ENCODE measurements at regions of chr18 and their contacts with region 1.

Region 1: GRCh38 chr18:45664824-45665763 is 49.8 kb downstream of the SLC14A2 start:
- DNase-seq: peak; percentile 53 to 88
- ATAC-seq: peak; percentile 78 to 89 (median 86)
- H3K4me3 ChIP-seq: no peak overlapping the region
- H3K4me3 Mint-ChIP-seq: peak overlapping the region; percentile 82
- H3K27ac ChIP-seq: peak overlapping the region; percentile 49
- H3K27ac Mint-ChIP-seq: peak overlapping the region; percentile 85 to 88
- H3K4me1 ChIP-seq: peaks cover 41% of the 10 kb centered on the region
- H3K4me1 Mint-ChIP-seq: peaks cover 35 to 55% of the 10 kb centered on the region in 2 donors
- H3K27me3 ChIP-seq: no peaks in the 10 kb centered on the region
- H3K27me3 Mint-ChIP-seq: no peaks in the 10 kb centered on the region
- CTCF ChIP-seq: peak; percentile 96

Region 2: GRCh38 chr18:45722899-45723298 is 57.8 kb after region 1 on chr18:
- intact Hi-C with region 1: loop called (anchors 1 kb)
- DNase-seq: peak; percentile 60 to 69
- ATAC-seq: peak; percentile 81 to 99 (median 99)
- H3K4me3 ChIP-seq: no peak overlapping the region
- H3K4me3 Mint-ChIP-seq: no peak overlapping the region
- H3K27ac ChIP-seq: no peak overlapping the region
- H3K27ac Mint-ChIP-seq: no peak overlapping the region
- H3K4me1 ChIP-seq: no peaks in the 10 kb centered on the region
- H3K4me1 Mint-ChIP-seq: no peaks in the 10 kb centered on the region
- H3K27me3 ChIP-seq: no peaks in the 10 kb centered on the region
- H3K27me3 Mint-ChIP-seq: no peaks in the 10 kb centered on the region
- CTCF ChIP-seq: peak; percentile 70

Region 3: GRCh38 chr18:45839414-45840395 is 174.6 kb after region 1 on chr18:
- intact Hi-C with region 1: loop called (anchors 1 kb)
- DNase-seq: peak in 1 of 2 donors; percentile 61
- ATAC-seq: peak; percentile 55 to 61 (median 60)
- H3K4me3 ChIP-seq: no peak overlapping the region
- H3K4me3 Mint-ChIP-seq: peak overlapping the region; percentile 76
- H3K27ac ChIP-seq: no peak overlapping the region
- H3K27ac Mint-ChIP-seq: no peak overlapping the region
- H3K4me1 ChIP-seq: peaks cover 11% of the 10 kb centered on the region
- H3K4me1 Mint-ChIP-seq: peaks cover 18 to 25% of the 10 kb centered on the region in 2 donors
- H3K27me3 ChIP-seq: peaks cover 20% of the 10 kb centered on the region
- H3K27me3 Mint-ChIP-seq: peaks cover 17 to 31% of the 10 kb centered on the region in 2 donors
- CTCF ChIP-seq: no peak

Region 4: GRCh38 chr18:45879681-45880655 is 214.9 kb after region 1 on chr18:
- intact Hi-C with region 1: loop called (anchors 1 kb)
- DNase-seq: peak; percentile 70 to 84
- ATAC-seq: peak; percentile 91 to 96 (median 95)
- H3K4me3 ChIP-seq: no peak overlapping the region
- H3K4me3 Mint-ChIP-seq: no peak overlapping the region
- H3K27ac ChIP-seq: no peak overlapping the region
- H3K27ac Mint-ChIP-seq: peak overlapping the region; percentile 72 to 79
- H3K4me1 ChIP-seq: peaks cover 12% of the 10 kb centered on the region
- H3K4me1 Mint-ChIP-seq: peaks cover 21 to 23% of the 10 kb centered on the region in 2 donors
- H3K27me3 ChIP-seq: no peaks in the 10 kb centered on the region
- H3K27me3 Mint-ChIP-seq: no peaks in the 10 kb centered on the region
- CTCF ChIP-seq: peak; percentile 99

Region 5: GRCh38 chr18:45910405-45911023 is 245.4 kb after region 1 on chr18:
- intact Hi-C with region 1: loop called (anchors 1 kb)
- DNase-seq: peak; percentile 44 to 75
- ATAC-seq: peak; percentile 82 to 94 (median 83)
- H3K4me3 ChIP-seq: no peak overlapping the region
- H3K4me3 Mint-ChIP-seq: no peak overlapping the region
- H3K27ac ChIP-seq: no peak overlapping the region
- H3K27ac Mint-ChIP-seq: peak overlapping the region in 1 of 2 donors; percentile 34
- H3K4me1 ChIP-seq: no peaks in the 10 kb centered on the region
- H3K4me1 Mint-ChIP-seq: peaks cover 0 to 5% of the 10 kb centered on the region in 2 donors
- H3K27me3 ChIP-seq: no peaks in the 10 kb centered on the region
- H3K27me3 Mint-ChIP-seq: no peaks in the 10 kb centered on the region
- CTCF ChIP-seq: peak; percentile 82

Region 6: DNA sequence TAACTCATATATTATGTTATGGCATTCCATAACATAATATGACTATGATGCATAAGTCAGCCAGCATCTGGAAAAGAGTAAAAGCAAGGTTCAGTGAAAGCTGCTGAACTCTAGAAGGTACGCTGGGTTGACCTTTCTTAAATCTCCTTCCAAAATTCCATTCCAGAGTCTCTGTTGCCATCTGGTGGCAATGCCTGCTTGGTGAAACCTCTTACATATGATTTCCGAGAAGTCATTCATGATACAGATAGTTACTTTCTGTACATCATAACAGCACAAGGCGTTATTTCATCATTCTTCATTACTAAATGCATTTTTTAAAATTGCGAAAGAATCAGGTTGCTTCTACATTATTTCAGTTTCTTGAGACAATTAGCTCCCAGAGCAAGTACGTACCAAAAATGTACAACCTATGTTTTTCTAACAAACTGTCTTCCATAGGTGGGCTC is 309.0 kb after region 1 on chr18:
- intact Hi-C with region 1: loop called (anchors 1 kb)
- DNase-seq: peak; percentile 57 to 82
- ATAC-seq: peak; percentile 90 to 97 (median 96)
- H3K4me3 ChIP-seq: no peak overlapping the region
- H3K4me3 Mint-ChIP-seq: no peak overlapping the region
- H3K27ac ChIP-seq: no peak overlapping the region
- H3K27ac Mint-ChIP-seq: no peak overlapping the region
- H3K4me1 ChIP-seq: no peaks in the 10 kb centered on the region
- H3K4me1 Mint-ChIP-seq: peaks cover 0 to 7% of the 10 kb centered on the region in 2 donors
- H3K27me3 ChIP-seq: no peaks in the 10 kb centered on the region
- H3K27me3 Mint-ChIP-seq: no peaks in the 10 kb centered on the region
- CTCF ChIP-seq: peak; percentile 83

Region 7: GRCh38 chr18:46073474-46074331 is 408.6 kb after region 1 on chr18:
- intact Hi-C with region 1: loop called (anchors 2 kb)
- DNase-seq: peak in 1 of 2 donors; percentile 85
- ATAC-seq: peak; percentile 54 to 58 (median 56)
- H3K4me3 ChIP-seq: no peak overlapping the region
- H3K4me3 Mint-ChIP-seq: peak overlapping the region; percentile 62
- H3K27ac ChIP-seq: no peak overlapping the region
- H3K27ac Mint-ChIP-seq: peak overlapping the region; percentile 13 to 61
- H3K4me1 ChIP-seq: peaks cover 34% of the 10 kb centered on the region
- H3K4me1 Mint-ChIP-seq: peaks cover 35 to 43% of the 10 kb centered on the region in 2 donors
- H3K27me3 ChIP-seq: peaks cover 2% of the 10 kb centered on the region
- H3K27me3 Mint-ChIP-seq: no peaks in the 10 kb centered on the region
- CTCF ChIP-seq: peak; percentile 79

Region 8: GRCh38 chr18:46199515-46200147 is 534.5 kb after region 1 on chr18:
- intact Hi-C with region 1: no loop called
- DNase-seq: no peak
- ATAC-seq: peak in 1 of 3 donors; percentile 49
- H3K4me3 ChIP-seq: no peak overlapping the region
- H3K4me3 Mint-ChIP-seq: no peak overlapping the region
- H3K27ac ChIP-seq: no peak overlapping the region
- H3K27ac Mint-ChIP-seq: peak overlapping the region; percentile 56 to 67
- H3K4me1 ChIP-seq: peaks cover 6% of the 10 kb centered on the region
- H3K4me1 Mint-ChIP-seq: peaks cover 41 to 57% of the 10 kb centered on the region in 2 donors
- H3K27me3 ChIP-seq: no peaks in the 10 kb centered on the region
- H3K27me3 Mint-ChIP-seq: no peaks in the 10 kb centered on the region
- CTCF ChIP-seq: no peak